IMR-90 (cell line): ENCODE measurements at regions of chr12 and their contacts with region 1.

Region 1: DNA sequence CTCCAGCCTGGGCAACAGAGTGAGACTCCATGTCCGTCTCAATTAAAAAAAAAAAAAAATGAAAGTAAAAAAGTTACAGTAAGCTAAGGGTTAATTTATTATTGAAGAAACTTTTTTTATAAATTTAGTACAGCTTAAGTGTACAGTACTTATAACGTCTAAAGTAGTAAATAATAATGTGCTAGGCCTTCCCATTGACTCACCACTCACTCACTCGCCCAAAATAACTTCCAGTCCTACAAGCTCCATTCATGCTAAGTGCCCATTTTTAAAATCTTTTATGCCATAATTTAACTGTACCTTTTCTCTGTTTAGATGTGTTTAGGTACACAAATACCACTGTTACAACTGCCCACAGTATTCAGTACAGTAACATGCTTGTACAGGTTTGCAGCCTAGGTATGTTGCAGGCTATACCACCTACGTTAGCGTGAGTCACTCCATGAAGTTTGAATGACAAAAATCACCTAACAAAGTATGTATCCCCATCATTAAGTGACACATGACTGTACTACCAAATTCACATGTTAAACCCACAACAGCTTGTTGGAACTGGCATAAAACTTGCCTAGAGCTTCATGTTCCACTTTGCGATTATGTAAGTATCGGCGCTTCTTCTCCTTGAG is 10.7 kb downstream of the KANSL2 start:
- DNase-seq: peak; percentile 67
- ATAC-seq: peak; percentile 74
- H3K4me3 ChIP-seq: no peak overlapping the region
- H3K27ac ChIP-seq: no peak overlapping the region
- H3K4me1 ChIP-seq: no peaks in the 10 kb centered on the region; the same call in 1 of the 2 replicates
- H3K27me3 ChIP-seq: no peaks in the 10 kb centered on the region
- CTCF ChIP-seq: no peak
- POLR2A ChIP-seq: no peak
- RAD21 ChIP-seq: no peak

Region 2: DNA sequence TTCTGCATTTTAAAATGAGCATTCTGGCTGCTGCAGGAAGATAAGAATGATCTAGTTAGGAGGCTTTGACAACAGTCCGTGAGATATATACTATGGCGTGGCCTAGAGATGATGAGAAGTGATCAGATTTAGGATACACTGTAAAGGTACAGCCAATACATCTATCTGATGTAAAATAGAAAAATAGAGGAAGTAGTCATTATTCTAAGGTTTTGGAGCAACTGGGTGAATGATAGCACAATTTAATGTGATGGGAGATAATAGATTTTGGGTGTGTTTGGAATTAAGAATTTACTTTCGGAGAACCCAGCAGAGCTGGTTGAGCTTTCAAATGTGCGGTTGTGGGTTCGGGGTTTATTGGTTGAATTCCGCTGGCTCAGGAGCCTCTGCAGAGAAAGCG is 199.1 kb before region 1 on chr12 and contains the start of gene ANP32D:
- CTCF ChIA-PET with region 1: no interaction called
- POLR2A ChIA-PET with region 1: no interaction called
- dilution Hi-C with region 1: no loop called
- in situ Hi-C with region 1: no loop called
- intact Hi-C with region 1: no loop called
- DNase-seq: no peak
- ATAC-seq: no peak
- H3K4me3 ChIP-seq: no peak within 1 kb of the TSS
- H3K27ac ChIP-seq: no peak within 1 kb of the TSS
- H3K4me1 ChIP-seq: no peaks in the 10 kb centered on the region
- H3K27me3 ChIP-seq: no peaks in the 10 kb centered on the region
- CTCF ChIP-seq: no peak
- POLR2A ChIP-seq: no peak
- RAD21 ChIP-seq: no peak
- total RNA-seq, gene ANP32D: not detected in 2 replicates

Region 3: DNA sequence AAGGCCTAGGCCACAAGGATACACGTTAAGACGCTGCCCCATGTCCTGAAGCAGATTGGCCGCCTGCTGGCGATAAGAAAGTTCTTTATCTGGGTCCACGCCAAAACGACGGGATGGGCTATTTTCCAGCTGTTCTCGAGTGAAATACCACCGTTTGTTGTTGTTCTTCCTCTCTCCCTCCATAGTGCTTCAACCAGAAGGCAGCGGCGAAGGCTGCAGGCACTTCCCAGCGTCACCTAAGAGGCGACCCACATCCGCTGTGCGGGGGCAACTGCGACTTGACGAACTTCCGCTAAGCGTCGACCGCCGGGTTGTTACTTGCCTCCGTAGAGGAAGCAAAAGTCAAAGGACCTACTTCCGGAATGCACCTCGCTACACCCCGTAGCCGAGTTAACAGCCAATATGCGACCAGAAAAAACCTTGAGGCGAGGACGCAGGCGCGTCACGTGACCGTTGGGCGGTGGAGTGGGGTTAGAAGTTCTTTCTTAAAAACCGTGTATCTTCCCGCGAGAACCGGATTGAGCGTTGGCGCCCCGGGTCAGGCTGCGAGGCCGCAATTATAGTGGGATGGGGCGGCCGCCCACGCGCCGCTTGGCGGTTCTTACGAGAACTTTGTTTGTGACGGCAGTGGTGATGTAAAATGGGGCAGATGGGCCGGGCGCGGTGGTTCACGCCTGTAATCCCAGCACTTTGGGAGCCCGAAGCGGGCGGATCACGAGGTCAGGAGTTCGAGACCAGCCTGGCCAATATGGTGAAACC is 45.3 kb after region 1 on chr12 and contains the start of gene CCNT1:
- CTCF ChIA-PET with region 1: no interaction called
- POLR2A ChIA-PET with region 1: no interaction called
- dilution Hi-C with region 1: no loop called
- in situ Hi-C with region 1: no loop called
- intact Hi-C with region 1: loop called (anchors 2 kb)
- DNase-seq: peak; percentile 100
- ATAC-seq: peak; percentile 95
- H3K4me3 ChIP-seq: peak within 1 kb of the TSS; percentile 69
- H3K27ac ChIP-seq: peak within 1 kb of the TSS; percentile 85
- H3K4me1 ChIP-seq: peaks cover 3% of the 10 kb centered on the region; the same call in 1 of the 2 replicates
- H3K27me3 ChIP-seq: no peaks in the 10 kb centered on the region
- CTCF ChIP-seq: peak; percentile 20; the same call in 1 of the 2 replicates
- POLR2A ChIP-seq: peak; percentile 94
- RAD21 ChIP-seq: no peak
- total RNA-seq, gene CCNT1: 30.3 and 74.0 TPM in 2 replicates